ENCODE measurements at regions of chr5 and their contacts with region 1.

Region 1: GRCh38 chr5:173237143-173237874 is 2.3 kb upstream of the NKX2-5 start:
- DNase-seq: no peak
- ATAC-seq: no peak
- H3K4me3 ChIP-seq: no peak overlapping the region
- H3K27ac ChIP-seq: no peak overlapping the region
- H3K4me1 ChIP-seq: no peaks in the 10 kb centered on the region
- H3K27me3 ChIP-seq: peaks cover 21% of the 10 kb centered on the region
- CTCF ChIP-seq: no peak

Region 2: GRCh38 chr5:172746725-172747124 is 490.6 kb before region 1 on chr5:
- CTCF ChIA-PET with region 1: no interaction called
- POLR2A ChIA-PET with region 1: interaction called, 16 read pairs
- intact Hi-C with region 1: no loop called
- DNase-seq: no peak
- ATAC-seq: no peak
- H3K4me3 ChIP-seq: no peak overlapping the region
- H3K27ac ChIP-seq: no peak overlapping the region
- H3K4me1 ChIP-seq: no peaks in the 10 kb centered on the region
- H3K27me3 ChIP-seq: no peaks in the 10 kb centered on the region
- CTCF ChIP-seq: no peak

Region 3: GRCh38 chr5:173324115-173325001 is 87.0 kb after region 1 on chr5:
- CTCF ChIA-PET with region 1: no interaction called
- POLR2A ChIA-PET with region 1: no interaction called
- intact Hi-C with region 1: no loop called
- DNase-seq: no peak
- ATAC-seq: no peak
- H3K4me3 ChIP-seq: no peak overlapping the region
- H3K27ac ChIP-seq: no peak overlapping the region
- H3K4me1 ChIP-seq: peaks cover 22% of the 10 kb centered on the region
- H3K27me3 ChIP-seq: no peaks in the 10 kb centered on the region
- CTCF ChIP-seq: no peak